Sciatic nerve (tissue), 2 donors: ENCODE measurements at regions of chr14 and their contacts with region 1.

Region 1: DNA sequence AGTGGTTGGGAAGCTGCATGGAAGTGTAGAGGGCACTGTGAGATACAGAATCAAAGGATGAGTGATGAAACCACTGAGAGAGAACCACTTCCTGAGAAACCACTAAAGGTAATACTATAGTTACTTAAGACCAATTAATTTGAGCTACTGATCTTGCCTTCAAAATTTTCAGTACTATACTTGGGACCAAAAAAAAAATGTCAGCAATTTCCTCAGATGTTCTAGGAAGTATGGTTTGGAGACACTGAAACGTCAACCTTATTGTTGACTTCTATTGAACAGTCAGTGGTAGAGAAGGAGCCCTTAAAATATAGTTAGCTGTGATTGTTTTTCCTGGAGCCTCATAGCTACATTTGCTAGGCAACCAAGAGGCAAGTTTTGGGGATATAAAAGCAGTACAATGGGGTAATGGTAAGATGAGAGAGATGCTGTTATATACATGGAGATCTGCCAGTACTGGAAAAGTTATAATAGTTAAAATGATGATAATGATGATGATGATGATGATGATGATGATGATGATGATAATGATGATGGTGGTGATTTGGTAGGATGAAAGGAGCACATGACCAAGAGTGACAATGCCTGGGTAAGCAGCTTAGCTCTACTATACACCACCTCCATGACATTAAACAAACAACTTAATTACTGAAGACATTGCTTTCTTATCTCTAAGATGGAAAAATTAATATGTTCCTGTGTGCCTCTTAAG is 300.9 kb upstream of the G2E3 start:
- DNase-seq: no peak
- ATAC-seq: no peak

Region 2: GRCh38 chr14:30185832-30186231 is 72.3 kb before region 1 on chr14:
- intact Hi-C with region 1: no loop called
- DNase-seq: no peak
- ATAC-seq: no peak

Region 3: DNA sequence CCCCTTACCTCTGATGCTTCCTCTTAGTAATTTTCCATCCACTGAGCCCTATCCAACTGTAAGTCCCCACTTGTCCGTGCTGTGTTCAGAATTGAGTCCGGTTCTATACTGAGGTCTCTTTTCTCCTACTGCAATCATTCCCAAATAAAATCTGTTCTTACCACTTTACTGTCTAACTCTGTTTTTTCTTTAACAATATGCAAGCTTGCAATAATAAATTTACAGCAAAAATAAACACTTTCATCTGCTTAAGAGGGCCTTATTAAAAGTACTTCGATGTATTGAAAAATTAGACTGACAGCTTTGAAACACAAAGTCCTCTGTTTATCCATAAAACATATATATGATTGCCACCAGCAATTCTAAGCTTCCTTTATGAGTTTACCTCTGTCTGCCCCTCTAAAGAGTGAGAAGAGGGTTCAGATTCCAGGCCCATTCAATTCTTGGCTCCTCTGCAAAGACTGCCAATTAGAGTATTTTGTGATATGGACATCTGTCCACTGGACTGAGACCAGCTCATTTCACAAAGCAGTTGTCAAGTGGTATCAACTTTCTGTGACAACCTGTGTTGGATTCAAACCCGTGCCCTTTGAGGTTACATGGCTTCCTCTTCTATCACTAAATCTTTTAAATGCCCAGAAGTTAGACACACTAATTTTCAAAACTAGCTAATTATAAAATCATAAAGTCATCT is 260.9 kb after region 1 on chr14:
- intact Hi-C with region 1: no loop called
- DNase-seq: no peak
- ATAC-seq: no peak

Region 4: GRCh38 chr14:31154956-31155355 is 896.9 kb after region 1 on chr14:
- intact Hi-C with region 1: loop called (anchors 5 kb)
- DNase-seq: no peak
- ATAC-seq: no peak